Activated naive CD4-positive, alpha-beta T cell treated with anti-CD3 and anti-CD28 coated beads, Interleukin-2, amount 10 ng/mL, durations not matched to agents 7 days and 5 days (primary cell): ENCODE measurements at regions of chr10 and their contacts with region 1.

Region 1: GRCh38 chr10:26556748-26557640 is 118.9 kb downstream of the APBB1IP start:
- DNase-seq: peak; percentile 44
- H3K4me3 Mint-ChIP-seq: no peak overlapping the region
- H3K27ac Mint-ChIP-seq: no peak overlapping the region
- H3K4me1 Mint-ChIP-seq: no peaks in the 10 kb centered on the region
- H3K27me3 Mint-ChIP-seq: no peaks in the 10 kb centered on the region

Region 2: DNA sequence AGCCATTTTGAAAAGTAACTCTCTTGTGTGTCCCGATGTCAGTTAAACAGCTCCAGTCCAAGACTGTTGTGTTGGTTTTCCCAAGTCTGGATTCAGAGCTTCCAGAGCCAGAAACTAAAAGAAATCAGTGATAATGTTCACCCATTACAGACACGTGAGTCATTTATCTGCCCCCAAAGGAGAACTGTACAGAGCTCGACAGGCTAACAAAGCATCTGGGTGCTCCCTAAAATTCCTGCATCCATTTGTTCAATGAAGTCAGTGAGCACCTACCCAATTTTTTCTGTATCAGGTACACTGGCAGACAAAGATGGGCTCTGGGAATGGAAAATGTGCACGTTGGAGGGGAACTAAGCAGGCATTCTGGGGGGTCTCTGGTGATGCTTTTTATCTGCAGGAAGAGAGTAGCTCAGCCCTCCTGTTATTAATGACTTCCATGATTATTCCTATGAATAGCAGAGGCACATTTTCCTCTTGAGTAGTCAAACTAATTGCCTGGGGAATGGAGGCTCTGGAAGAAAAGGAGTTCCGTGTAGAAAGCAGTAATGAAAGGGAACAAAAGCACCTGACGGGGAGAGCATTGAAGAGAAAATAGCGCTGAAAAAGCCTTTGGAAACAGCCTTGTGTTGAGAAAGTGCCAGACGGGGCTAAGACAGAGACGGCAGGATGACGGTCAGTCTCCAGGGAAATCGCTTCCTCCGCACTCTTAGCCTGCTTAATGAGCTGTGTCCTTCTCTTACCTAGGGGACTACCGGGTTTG is 265.1 kb before region 1 on chr10:
- CTCF ChIA-PET with region 1: no interaction called
- DNase-seq: no peak
- H3K4me3 Mint-ChIP-seq: no peak overlapping the region
- H3K27ac Mint-ChIP-seq: no peak overlapping the region
- H3K4me1 Mint-ChIP-seq: no peaks in the 10 kb centered on the region
- H3K27me3 Mint-ChIP-seq: peaks cover 14% of the 10 kb centered on the region

Region 3: GRCh38 chr10:26334932-26335573 is 221.9 kb before region 1 on chr10:
- CTCF ChIA-PET with region 1: interaction called, 73 read pairs
- DNase-seq: peak; percentile 73
- H3K4me3 Mint-ChIP-seq: peak overlapping the region; percentile 57
- H3K27ac Mint-ChIP-seq: no peak overlapping the region
- H3K4me1 Mint-ChIP-seq: peaks cover 13% of the 10 kb centered on the region
- H3K27me3 Mint-ChIP-seq: no peaks in the 10 kb centered on the region

Region 4: GRCh38 chr10:26627324-26627723 is 70.3 kb after region 1 on chr10:
- CTCF ChIA-PET with region 1: no interaction called
- DNase-seq: no peak
- H3K4me3 Mint-ChIP-seq: no peak overlapping the region
- H3K27ac Mint-ChIP-seq: no peak overlapping the region
- H3K4me1 Mint-ChIP-seq: peaks cover 3% of the 10 kb centered on the region
- H3K27me3 Mint-ChIP-seq: peaks cover 12% of the 10 kb centered on the region